ENCODE measurements at regions of chr5 and their contacts with region 1.

Region 1: GRCh38 chr5:156824800-156825199 is 25.3 kb upstream of the PPP1R2B start:
- DNase-seq: no peak
- ATAC-seq: peak; percentile 48 to 84 (median 64)
- H3K4me3 ChIP-seq: no peak overlapping the region
- H3K27ac ChIP-seq: no peak overlapping the region
- H3K4me1 ChIP-seq: no peaks in the 10 kb centered on the region
- H3K27me3 ChIP-seq: no peaks in the 10 kb centered on the region
- CTCF ChIP-seq: peak; percentile 17 to 67 (median 56)
- POLR2A ChIP-seq: no peak

Region 2: GRCh38 chr5:155136216-155136850 is 1688.5 kb before region 1 on chr5:
- intact Hi-C with region 1: loop called in 2 of 10 experiments (anchors 10 kb)
- DNase-seq: no peak
- ATAC-seq: peak in 3 of 4 donors; percentile 47 to 58 (median 51)
- H3K4me3 ChIP-seq: no peak overlapping the region
- H3K27ac ChIP-seq: no peak overlapping the region
- H3K4me1 ChIP-seq: peaks cover 0 to 7% (median 0%) of the 10 kb centered on the region in 12 donors
- H3K27me3 ChIP-seq: no peaks in the 10 kb centered on the region
- CTCF ChIP-seq: no peak
- POLR2A ChIP-seq: no peak

Region 3: DNA sequence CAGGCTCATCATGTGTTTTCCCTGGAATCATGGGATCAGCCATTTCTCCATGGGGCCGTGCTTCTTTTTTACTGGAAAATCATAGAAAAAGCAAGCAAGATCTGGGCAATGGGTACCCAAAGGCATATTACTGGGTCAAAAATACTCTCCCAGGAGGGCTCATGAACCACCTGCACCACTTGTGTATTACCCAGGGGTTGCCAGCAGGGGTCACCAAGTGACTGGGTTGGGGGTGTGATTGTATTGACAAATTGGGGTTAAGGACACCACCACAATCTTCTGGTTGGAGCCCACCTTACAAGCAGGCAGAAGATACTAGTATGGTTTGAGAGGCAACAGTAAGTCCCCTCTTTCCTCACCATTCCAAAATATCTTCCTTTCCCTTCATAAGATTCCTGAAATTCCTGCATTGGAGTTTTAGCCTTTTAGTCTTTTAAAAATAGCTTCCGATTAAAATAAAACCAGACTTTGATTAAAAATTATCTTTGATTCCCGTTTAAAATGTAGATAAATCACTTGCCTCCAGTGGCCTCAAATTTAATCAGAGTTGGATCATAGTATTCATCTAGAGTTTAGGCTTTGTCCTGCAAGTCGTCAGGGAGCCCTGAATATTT is 1207.9 kb before region 1 on chr5:
- intact Hi-C with region 1: loop called in 1 of 10 experiments (anchors 10 kb)
- DNase-seq: peak in 2 of 5 donors; percentile 31 to 65
- ATAC-seq: peak in 2 of 4 donors; percentile 37 to 60
- H3K4me3 ChIP-seq: no peak overlapping the region
- H3K27ac ChIP-seq: no peak overlapping the region
- H3K4me1 ChIP-seq: peaks cover 0 to 6% (median 0%) of the 10 kb centered on the region in 12 donors
- H3K27me3 ChIP-seq: no peaks in the 10 kb centered on the region
- CTCF ChIP-seq: peak; percentile 33 to 65 (median 54)
- POLR2A ChIP-seq: no peak

Region 4: DNA sequence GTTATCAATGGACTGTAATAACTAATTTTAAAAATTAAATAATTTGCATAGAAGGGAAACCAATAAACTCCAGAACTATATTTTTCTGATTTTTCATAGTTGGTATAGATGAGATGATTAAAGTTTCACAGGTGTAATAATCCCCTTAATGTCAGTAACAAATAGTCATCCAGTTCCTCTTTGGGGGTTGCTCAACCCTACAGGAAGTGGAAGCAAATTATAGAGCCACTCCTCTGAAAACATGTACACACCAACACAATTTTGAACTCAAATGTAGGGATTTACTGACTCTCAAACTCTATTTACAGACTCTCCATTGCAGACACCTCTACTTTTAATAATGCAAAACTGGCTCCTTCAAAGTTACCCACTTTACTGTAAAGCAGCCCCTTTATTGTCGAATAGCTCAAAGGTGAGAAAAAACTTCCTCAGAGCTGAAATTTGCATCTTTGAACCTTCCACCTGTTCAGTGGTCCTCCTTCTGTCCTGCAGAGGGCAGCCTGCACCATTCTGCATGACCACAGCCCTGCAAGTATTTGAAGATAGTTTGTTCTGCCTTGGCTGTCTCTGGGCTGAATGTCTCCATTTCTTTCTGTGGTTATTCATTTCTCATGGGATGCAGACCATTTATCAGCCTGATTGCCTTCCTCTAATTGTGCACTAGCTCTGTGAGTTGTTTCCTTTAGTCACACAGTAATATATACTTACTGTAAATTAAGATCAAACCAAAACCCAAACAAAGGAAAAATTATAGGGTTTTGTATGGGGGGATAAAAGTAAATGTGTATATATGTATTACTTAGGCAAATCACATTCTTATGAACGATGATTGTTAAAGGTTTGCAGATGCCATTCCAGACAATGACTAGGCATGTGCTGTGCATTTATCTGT is 881.0 kb before region 1 on chr5:
- intact Hi-C with region 1: loop called in 9 of 10 experiments (anchors 5 to 10 kb)
- DNase-seq: peak in 4 of 5 donors; percentile 28 to 50 (median 40)
- ATAC-seq: peak; percentile 64 to 93 (median 76)
- H3K4me3 ChIP-seq: no peak overlapping the region
- H3K27ac ChIP-seq: no peak overlapping the region
- H3K4me1 ChIP-seq: peaks cover 0 to 10% (median 0%) of the 10 kb centered on the region in 12 donors
- H3K27me3 ChIP-seq: no peaks in the 10 kb centered on the region
- CTCF ChIP-seq: peak; percentile 51 to 81 (median 72)
- POLR2A ChIP-seq: no peak

Measured in heart left ventricle (tissue), 16 donors.